Psoas muscle (tissue), 8 donors: ENCODE measurements at regions of chr6 and their contacts with region 1.

Region 1: DNA sequence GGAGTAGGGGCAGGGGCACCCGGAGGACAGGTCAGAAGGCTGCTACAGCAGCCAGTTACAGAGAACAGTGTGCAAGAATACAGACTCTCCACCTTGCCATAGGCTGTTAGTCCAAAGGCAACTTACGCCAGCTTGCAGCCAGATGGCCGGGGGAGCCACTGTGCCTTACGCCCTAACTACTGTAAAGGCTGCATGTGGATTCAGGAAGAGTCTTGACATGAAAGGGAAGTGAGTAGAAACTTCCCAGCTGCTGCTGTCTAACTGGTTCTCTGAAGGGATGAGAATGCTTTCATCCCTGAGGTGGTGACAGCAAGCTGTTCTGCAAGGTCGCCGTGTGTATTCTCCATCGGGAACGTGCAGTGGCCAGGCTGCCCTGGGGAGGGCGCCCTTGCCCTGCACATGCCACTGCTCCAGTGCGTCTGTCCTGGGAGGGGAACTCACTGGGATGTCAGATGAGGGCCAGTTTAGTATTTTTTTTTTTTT is 46.1 kb downstream of the LYRM4 start:
- DNase-seq: peak in 1 of 2 donors; percentile 29
- ATAC-seq: peak; percentile 44 to 87 (median 63)
- H3K4me3 ChIP-seq: no peak overlapping the region
- H3K27ac ChIP-seq: no peak overlapping the region
- H3K4me1 ChIP-seq: no peaks in the 10 kb centered on the region
- H3K27me3 ChIP-seq: no peaks in the 10 kb centered on the region
- CTCF ChIP-seq: peak; percentile 51

Region 2: DNA sequence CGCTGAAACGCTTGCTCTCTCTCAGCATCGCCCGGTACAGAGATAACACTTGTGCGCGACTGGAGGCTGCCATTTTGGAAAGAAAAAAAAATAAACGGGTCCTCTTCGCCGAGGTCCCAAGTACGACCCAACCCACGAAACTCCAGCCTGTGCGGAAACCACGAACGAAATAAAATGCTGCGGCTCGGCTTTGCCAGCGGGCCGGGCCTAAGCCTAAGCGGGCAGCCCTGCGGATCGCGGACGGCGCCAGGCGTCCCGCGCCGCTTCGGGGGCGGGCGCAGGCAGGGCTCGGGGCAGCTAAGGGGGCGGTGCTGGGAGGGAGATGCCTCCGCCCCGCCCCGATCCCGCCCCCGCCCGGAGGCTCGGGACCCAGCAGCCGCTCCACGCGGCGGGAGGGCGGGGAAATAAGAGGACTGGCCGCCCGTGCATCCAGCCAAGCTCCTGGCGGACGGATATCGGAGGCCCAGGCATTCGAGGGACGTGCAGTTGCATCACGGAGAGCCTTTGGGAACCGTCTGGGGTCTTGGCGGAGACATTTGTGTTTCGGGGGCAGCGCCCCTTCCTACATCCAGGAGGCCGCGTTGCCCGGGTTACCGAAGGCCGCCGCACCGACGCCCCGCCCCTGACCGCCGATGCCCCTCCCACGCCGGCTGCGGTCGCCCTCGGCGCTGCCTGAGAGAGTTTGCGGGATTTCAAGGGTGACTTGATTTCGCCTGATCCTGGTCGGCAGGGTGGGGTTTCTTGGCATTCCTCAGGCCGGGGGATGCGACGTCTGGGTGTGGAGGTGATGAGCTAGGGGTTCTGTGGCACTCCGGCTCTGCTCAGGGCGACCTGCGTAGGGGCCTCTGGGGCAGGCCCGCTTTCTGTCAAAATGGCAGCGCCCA is 46.3 kb after region 1 on chr6 and contains the starts of genes FARS2 and LYRM4:
- intact Hi-C with region 1: loop called in 1 of 2 experiments (anchors 5 kb)
- DNase-seq: peak; percentile 92 to 96
- ATAC-seq: peak; percentile 97 to 98 (median 98)
- H3K4me3 ChIP-seq: peak within 1 kb of the TSS; percentile 85
- H3K27ac ChIP-seq: peak within 1 kb of the TSS; percentile 99
- H3K4me1 ChIP-seq: peaks cover 19% of the 10 kb centered on the region
- H3K27me3 ChIP-seq: no peaks in the 10 kb centered on the region
- CTCF ChIP-seq: no peak
- total RNA-seq, gene FARS2: 10.6 to 17.5 (median 15.8) TPM
- total RNA-seq, gene LYRM4: 11.3 to 21.1 (median 16.2) TPM

Region 3: DNA sequence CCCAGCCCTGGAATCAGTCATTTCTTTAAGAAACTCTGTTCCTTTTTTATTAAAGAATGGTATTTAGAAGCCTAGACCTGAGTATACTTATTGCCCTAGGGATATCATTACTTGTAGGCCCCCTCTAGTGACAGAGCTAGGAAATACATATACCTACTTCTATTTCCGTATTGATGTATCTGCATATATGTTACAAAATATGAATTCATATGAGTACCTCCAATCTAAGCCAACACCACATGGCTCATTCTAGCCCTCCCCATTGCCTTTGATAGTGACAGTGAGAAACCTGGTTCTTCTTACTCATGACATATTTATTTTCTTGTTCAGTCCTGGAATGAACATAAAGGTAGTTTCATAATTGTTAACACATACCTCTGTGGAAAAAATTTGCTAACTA is 183.9 kb after region 1 on chr6:
- intact Hi-C with region 1: loop called in 1 of 2 experiments (anchors 10 kb)
- DNase-seq: no peak
- ATAC-seq: peak in 2 of 4 donors; percentile 40 to 61
- H3K4me3 ChIP-seq: no peak overlapping the region
- H3K27ac ChIP-seq: no peak overlapping the region
- H3K4me1 ChIP-seq: no peaks in the 10 kb centered on the region
- H3K27me3 ChIP-seq: no peaks in the 10 kb centered on the region
- CTCF ChIP-seq: peak; percentile 43